T-cell (primary cell): ENCODE measurements at regions of chr14 and their contacts with region 1.

Region 1: DNA sequence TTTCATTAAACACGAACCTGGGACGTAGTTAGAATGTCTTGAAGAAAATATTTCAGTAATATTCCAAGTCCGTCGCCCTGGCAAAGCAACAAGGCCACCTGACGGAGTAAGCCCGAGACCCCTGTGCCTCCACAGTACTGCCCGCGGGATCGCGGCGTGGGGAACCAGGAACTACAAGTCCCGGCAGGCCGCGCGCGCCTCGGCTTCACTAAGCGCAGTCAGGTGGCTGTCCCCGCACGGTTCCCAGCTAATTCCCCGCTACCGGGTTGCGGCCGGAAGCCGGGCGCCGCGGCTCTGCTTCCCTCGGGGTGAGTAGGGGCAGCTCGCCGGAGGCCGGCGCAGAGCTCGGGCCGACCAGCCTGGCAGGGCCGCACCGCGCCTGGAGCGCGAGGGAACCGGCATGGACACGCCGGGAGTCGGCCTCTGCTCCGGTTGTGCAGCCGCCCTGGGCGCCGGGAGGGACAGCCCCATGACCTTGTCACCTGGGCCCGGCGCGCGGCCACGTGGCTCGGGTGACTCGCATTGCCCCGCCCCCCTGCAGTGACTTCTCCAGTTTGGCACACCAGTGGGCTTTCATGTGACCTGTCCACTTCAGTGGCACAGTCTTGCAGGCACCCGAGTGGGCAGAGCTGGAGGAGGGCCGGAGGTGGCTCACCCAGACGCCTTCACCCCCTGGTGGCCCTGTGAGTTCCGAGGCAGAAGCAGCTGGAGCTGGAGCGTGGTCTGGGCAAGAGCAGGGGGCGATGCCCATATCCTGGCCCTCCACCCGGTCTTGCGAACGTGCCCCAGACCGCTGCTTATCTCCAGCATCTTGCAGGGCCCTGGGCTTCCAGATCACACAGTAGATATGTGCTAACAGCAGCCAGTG is at the start of gene ADCK1:
- DNase-seq: peak; percentile 54 to 87 (median 76)
- ATAC-seq: peak; percentile 91 to 94 (median 92)
- H3K4me3 ChIP-seq: peak within 1 kb of the TSS; percentile 71 to 78
- H3K4me3 Mint-ChIP-seq: peak within 1 kb of the TSS; percentile 82 to 88 (median 84)
- H3K27ac ChIP-seq: peak within 1 kb of the TSS; percentile 48
- H3K27ac Mint-ChIP-seq: peak within 1 kb of the TSS; percentile 82 to 89
- H3K4me1 ChIP-seq: peaks cover 0 to 15% of the 10 kb centered on the region in 2 experiments
- H3K4me1 Mint-ChIP-seq: peaks cover 8 to 26% (median 11%) of the 10 kb centered on the region in 3 donors
- H3K27me3 ChIP-seq: no peaks in the 10 kb centered on the region
- H3K27me3 Mint-ChIP-seq: no peaks in the 10 kb centered on the region
- total RNA-seq, gene ADCK1: 6.3 to 16.1 (median 9.1) TPM

Region 2: DNA sequence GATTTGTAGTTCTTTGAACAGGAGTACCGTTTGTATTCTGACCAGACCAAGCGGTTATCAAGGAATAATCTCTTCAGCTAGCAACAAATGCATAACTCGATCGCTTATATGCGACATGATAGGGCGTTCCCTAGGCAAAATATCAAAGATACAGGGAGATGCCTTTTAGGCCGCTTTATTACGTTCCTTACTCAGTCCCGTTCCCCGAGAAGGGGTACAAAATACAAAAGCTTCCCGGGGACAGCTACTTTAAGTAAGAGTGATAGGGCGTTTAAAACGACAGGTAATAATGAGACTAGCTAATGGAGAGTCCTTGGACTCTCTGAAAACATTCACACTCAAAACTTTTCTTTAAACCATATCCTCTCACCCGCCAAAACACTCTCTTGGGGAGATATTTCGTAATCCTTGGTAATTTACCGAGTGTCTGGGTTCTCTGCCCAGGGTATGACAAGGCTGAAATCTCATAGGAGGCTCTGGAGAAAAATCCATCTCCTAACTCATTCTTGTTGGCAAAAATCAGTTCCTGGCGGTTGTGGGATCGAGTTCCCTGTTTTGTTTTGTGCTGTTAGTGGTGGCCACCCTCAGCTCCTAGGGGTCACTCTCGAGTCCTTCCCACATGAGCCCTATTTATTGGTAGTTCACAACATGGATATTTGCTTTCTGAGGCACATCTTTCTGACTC is 38.7 kb before region 1 on chr14:
- CTCF ChIA-PET with region 1: no interaction called
- POLR2A ChIA-PET with region 1: interaction called in 1 of 2 experiments, 10 read pairs
- DNase-seq: no peak
- ATAC-seq: peak; percentile 19 to 36 (median 24)
- H3K4me3 ChIP-seq: peak overlapping the region; percentile 91 to 95
- H3K4me3 Mint-ChIP-seq: peak overlapping the region; percentile 96 to 99 (median 98)
- H3K27ac ChIP-seq: peak overlapping the region; percentile 97
- H3K27ac Mint-ChIP-seq: peak overlapping the region; percentile 95 to 96
- H3K4me1 ChIP-seq: peaks cover 9 to 33% of the 10 kb centered on the region in 2 experiments
- H3K4me1 Mint-ChIP-seq: peaks cover 43 to 46% (median 44%) of the 10 kb centered on the region in 3 donors
- H3K27me3 ChIP-seq: no peaks in the 10 kb centered on the region
- H3K27me3 Mint-ChIP-seq: no peaks in the 10 kb centered on the region